Activated CD4-positive, alpha-beta memory T cell treated with anti-CD3 and anti-CD28 coated beads, Interleukin-2, amount 10 ng/mL, durations not matched to agents 7 days and 5 days (primary cell): ENCODE measurements at regions of chr7 and their contacts with region 1.

Region 1: GRCh38 chr7:45026984-45027773 is 27.2 kb downstream of the CCM2 start:
- DNase-seq: peak; percentile 46
- H3K4me3 Mint-ChIP-seq: peak overlapping the region; percentile 83
- H3K27ac Mint-ChIP-seq: peak overlapping the region; percentile 81
- H3K4me1 Mint-ChIP-seq: peaks cover 64% of the 10 kb centered on the region
- H3K27me3 Mint-ChIP-seq: no peaks in the 10 kb centered on the region

Region 2: DNA sequence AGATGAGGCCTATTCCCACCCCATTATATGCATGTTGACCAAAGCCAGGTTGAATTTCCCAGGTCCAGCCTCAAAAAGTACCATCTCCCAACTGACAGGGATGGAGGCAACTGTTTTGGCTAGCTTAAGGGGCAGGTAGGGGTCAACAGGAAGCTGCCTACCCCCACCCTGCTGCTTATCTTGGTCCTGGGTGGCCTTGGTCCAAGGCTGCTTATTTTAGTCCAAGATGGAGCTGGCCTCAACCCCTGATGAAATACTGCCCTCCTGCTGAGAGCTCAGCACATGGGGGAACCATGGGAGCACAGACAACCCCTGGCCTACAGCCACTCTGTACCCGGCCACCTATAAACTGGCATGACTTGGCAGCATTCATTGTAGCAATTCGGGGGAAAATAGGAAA is 71.4 kb before region 1 on chr7:
- CTCF ChIA-PET with region 1: no interaction called
- POLR2A ChIA-PET with region 1: interaction called, 12 read pairs
- DNase-seq: no peak
- H3K4me3 Mint-ChIP-seq: no peak overlapping the region
- H3K27ac Mint-ChIP-seq: no peak overlapping the region
- H3K4me1 Mint-ChIP-seq: peaks cover 20% of the 10 kb centered on the region
- H3K27me3 Mint-ChIP-seq: peaks cover 28% of the 10 kb centered on the region

Region 3: GRCh38 chr7:44986218-44987053 is 40.7 kb before region 1 on chr7:
- CTCF ChIA-PET with region 1: no interaction called
- POLR2A ChIA-PET with region 1: interaction called, 412 read pairs
- DNase-seq: peak; percentile 96
- H3K4me3 Mint-ChIP-seq: peak overlapping the region; percentile 99
- H3K27ac Mint-ChIP-seq: peak overlapping the region; percentile 96
- H3K4me1 Mint-ChIP-seq: peaks cover 73% of the 10 kb centered on the region
- H3K27me3 Mint-ChIP-seq: no peaks in the 10 kb centered on the region

Region 4: GRCh38 chr7:45013465-45013967 is 13.7 kb before region 1 on chr7:
- CTCF ChIA-PET with region 1: interaction called, 7 read pairs
- POLR2A ChIA-PET with region 1: interaction called, 10 read pairs
- DNase-seq: no peak
- H3K4me3 Mint-ChIP-seq: no peak overlapping the region
- H3K27ac Mint-ChIP-seq: peak overlapping the region; percentile 7
- H3K4me1 Mint-ChIP-seq: peaks cover 28% of the 10 kb centered on the region
- H3K27me3 Mint-ChIP-seq: no peaks in the 10 kb centered on the region

Region 5: GRCh38 chr7:45111298-45112223 is 84.4 kb after region 1 on chr7 and contains the start of gene TBRG4:
- CTCF ChIA-PET with region 1: no interaction called
- POLR2A ChIA-PET with region 1: interaction called, 41 read pairs
- DNase-seq: peak; percentile 96
- H3K4me3 Mint-ChIP-seq: peak within 1 kb of the TSS; percentile 90
- H3K27ac Mint-ChIP-seq: peak within 1 kb of the TSS; percentile 89
- H3K4me1 Mint-ChIP-seq: peaks cover 50% of the 10 kb centered on the region
- H3K27me3 Mint-ChIP-seq: peaks cover 10% of the 10 kb centered on the region
- total RNA-seq, gene TBRG4: 98.8 to 103 TPM

Region 6: GRCh38 chr7:45224832-45225231 is 197.7 kb after region 1 on chr7:
- CTCF ChIA-PET with region 1: no interaction called
- POLR2A ChIA-PET with region 1: no interaction called
- DNase-seq: no peak
- H3K4me3 Mint-ChIP-seq: no peak overlapping the region
- H3K27ac Mint-ChIP-seq: no peak overlapping the region
- H3K4me1 Mint-ChIP-seq: no peaks in the 10 kb centered on the region
- H3K27me3 Mint-ChIP-seq: peaks cover 38% of the 10 kb centered on the region